OCI-LY7 (cell line): ENCODE measurements at regions of chr4 and their contacts with region 1.

Region 1: GRCh38 chr4:25159884-25160713 is at the start of gene SEPSECS:
- DNase-seq: peak; percentile 97
- H3K4me3 ChIP-seq: peak within 1 kb of the TSS; percentile 75
- H3K27ac ChIP-seq: peak within 1 kb of the TSS; percentile 89
- H3K4me1 ChIP-seq: peaks cover 24% of the 10 kb centered on the region
- CTCF ChIP-seq: no peak
- total RNA-seq, gene SEPSECS: 5.0 and 5.8 TPM in 2 replicates

Region 2: DNA sequence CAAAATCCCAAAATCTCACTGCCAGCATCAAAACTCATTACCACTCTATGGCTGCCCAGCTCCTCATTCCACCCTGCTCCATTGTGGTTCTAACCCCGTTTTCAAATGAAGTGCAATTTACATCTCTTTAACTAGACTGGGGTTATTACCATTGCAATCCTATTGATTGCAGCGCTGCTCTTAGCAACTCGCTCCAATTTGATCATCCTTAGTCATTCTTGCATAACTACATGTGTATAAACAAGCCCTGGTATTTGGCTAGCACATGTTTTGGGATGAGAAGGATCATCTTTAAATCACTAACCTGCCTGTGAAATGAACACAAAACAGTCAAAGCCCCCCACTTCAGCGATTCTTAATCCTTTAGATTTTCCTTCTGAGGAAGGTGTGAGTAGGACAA is 930.1 kb before region 1 on chr4:
- CTCF ChIA-PET with region 1: no interaction called
- POLR2A ChIA-PET with region 1: no interaction called
- intact Hi-C with region 1: no loop called
- DNase-seq: no peak
- H3K4me3 ChIP-seq: no peak overlapping the region
- H3K27ac ChIP-seq: no peak overlapping the region
- H3K4me1 ChIP-seq: no peaks in the 10 kb centered on the region
- CTCF ChIP-seq: no peak

Region 3: GRCh38 chr4:24584175-24584850 is 575.8 kb before region 1 on chr4 and contains the start of gene DHX15:
- CTCF ChIA-PET with region 1: no interaction called
- POLR2A ChIA-PET with region 1: interaction called, 5 read pairs
- intact Hi-C with region 1: loop called (anchors 2 kb)
- DNase-seq: peak; percentile 98
- H3K4me3 ChIP-seq: peak within 1 kb of the TSS; percentile 100
- H3K27ac ChIP-seq: peak within 1 kb of the TSS; percentile 79
- H3K4me1 ChIP-seq: peaks cover 49% of the 10 kb centered on the region
- CTCF ChIP-seq: no peak
- total RNA-seq, gene DHX15: 189 and 206 TPM in 2 replicates

Region 4: DNA sequence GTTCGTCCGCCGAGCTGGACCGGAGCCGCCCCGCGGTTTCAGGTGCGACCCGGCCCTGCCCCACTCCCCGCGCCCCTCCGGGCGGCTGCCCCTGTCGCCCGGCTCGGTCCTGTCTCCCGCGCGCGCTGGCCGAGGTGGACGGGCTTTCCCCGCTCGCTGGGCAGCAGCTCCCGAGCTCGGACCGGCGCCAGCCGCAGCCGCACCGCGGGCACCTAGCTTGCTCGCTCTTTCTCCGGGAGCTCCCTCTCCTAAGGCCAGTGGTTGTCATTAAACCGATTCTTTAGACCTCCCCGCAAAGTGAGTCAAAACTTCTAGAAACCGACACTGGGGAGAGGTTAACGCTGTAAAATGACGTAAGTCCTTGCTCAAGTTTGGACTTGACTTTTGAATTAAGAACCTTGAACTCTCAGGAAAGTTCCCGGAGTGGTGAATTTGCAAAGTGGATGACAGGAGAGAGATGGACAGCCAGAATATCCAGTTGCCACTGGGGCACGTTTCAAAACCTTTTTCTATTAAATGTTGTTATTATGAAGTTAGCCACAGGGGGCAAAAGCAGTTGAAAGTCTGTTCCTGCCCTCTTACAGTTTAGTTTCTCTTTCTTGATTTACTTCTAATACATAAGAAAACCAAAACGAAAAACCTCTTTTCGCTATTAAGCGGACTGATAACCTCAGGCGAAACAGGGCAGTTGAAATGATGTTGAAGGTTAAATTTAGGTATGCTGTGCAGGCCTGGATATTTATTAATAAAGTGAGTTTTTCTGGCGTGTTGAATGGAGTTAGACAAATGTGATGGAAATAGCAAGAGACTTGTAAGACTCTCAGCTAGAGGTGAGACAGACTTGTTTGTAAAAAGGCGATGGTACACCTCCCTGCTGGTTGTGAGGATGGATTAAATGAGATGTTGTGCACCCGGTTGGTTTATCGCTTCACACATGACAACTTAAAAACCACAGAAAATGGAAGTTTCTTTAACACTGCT is 74.6 kb after region 1 on chr4:
- CTCF ChIA-PET with region 1: interaction called, 3 read pairs
- POLR2A ChIA-PET with region 1: interaction called, 18 read pairs
- intact Hi-C with region 1: loop called (anchors 2 kb)
- DNase-seq: peak; percentile 85
- H3K4me3 ChIP-seq: peak overlapping the region; percentile 96
- H3K27ac ChIP-seq: peak overlapping the region; percentile 88
- H3K4me1 ChIP-seq: peaks cover 43% of the 10 kb centered on the region
- CTCF ChIP-seq: peak; percentile 79

Region 5: GRCh38 chr4:25376754-25377571 is 216.9 kb after region 1 on chr4 and contains the start of gene ANAPC4:
- CTCF ChIA-PET with region 1: no interaction called
- POLR2A ChIA-PET with region 1: interaction called, 8 read pairs
- intact Hi-C with region 1: loop called (anchors 5 kb)
- DNase-seq: peak; percentile 96
- H3K4me3 ChIP-seq: peak within 1 kb of the TSS; percentile 100
- H3K27ac ChIP-seq: peak within 1 kb of the TSS; percentile 54
- H3K4me1 ChIP-seq: peaks cover 24% of the 10 kb centered on the region
- CTCF ChIP-seq: no peak
- total RNA-seq, gene ANAPC4: 32.7 and 36.1 TPM in 2 replicates

Region 6: DNA sequence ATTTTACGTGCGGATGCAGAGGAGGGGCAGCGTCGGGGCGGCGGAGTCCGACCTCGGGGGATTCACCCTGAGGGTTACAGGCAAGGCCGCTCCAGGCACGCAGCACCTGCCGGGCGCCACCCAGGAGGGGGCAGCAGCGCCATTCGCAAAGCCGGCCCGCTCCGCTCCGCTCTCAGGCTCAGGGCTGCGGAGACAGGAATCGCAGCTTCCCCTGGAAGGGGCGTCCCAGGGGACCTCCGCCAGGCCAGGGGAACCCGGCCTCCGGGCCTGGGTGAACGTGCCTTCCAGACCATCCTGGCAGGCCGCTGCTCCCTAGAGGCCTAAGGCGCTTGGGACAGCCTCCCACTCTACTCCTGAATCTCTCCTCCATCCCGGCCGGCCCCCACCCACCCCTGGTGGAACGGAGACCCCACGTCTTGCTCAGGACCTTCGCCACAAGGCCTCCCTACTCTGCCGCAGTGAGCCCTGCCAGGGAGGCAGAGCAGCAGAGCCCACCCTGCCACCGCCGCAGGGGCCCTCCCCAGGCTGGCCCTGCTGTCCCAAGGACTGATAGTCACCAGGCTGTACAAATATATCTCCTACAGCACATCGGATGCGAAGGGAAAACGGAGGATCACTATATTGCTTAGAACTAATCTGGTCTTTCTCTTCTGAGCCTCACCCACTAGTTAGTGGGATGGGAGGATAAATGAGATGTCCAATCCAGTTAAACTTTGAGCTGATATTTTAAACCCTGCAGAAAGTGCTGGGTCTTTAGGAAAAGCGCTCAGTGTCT is 868.9 kb after region 1 on chr4:
- CTCF ChIA-PET with region 1: no interaction called
- POLR2A ChIA-PET with region 1: no interaction called
- intact Hi-C with region 1: no loop called
- DNase-seq: no peak
- H3K4me3 ChIP-seq: no peak overlapping the region
- H3K27ac ChIP-seq: no peak overlapping the region
- H3K4me1 ChIP-seq: no peaks in the 10 kb centered on the region
- CTCF ChIP-seq: peak; percentile 34; the same call in 1 of the 2 replicates